Activated naive CD4-positive, alpha-beta T cell treated with anti-CD3 and anti-CD28 coated beads, Interleukin-2, amount 10 ng/mL, durations not matched to agents 7 days and 5 days (primary cell): ENCODE measurements at regions of chr16 and their contacts with region 1.

Region 1: GRCh38 chr16:19502395-19503131 is 19.3 kb downstream of the GDE1 start:
- DNase-seq: peak; percentile 82
- H3K4me3 Mint-ChIP-seq: no peak overlapping the region
- H3K27ac Mint-ChIP-seq: no peak overlapping the region
- H3K4me1 Mint-ChIP-seq: no peaks in the 10 kb centered on the region
- H3K27me3 Mint-ChIP-seq: no peaks in the 10 kb centered on the region

Region 2: GRCh38 chr16:19086322-19087199 is 416.0 kb before region 1 on chr16:
- CTCF ChIA-PET with region 1: interaction called, 29 read pairs
- DNase-seq: peak; percentile 80
- H3K4me3 Mint-ChIP-seq: peak overlapping the region; percentile 38
- H3K27ac Mint-ChIP-seq: no peak overlapping the region
- H3K4me1 Mint-ChIP-seq: peaks cover 6% of the 10 kb centered on the region
- H3K27me3 Mint-ChIP-seq: peaks cover 38% of the 10 kb centered on the region

Region 3: GRCh38 chr16:19382887-19383816 is 119.4 kb before region 1 on chr16:
- CTCF ChIA-PET with region 1: interaction called, 82 read pairs
- DNase-seq: no peak
- H3K4me3 Mint-ChIP-seq: no peak overlapping the region
- H3K27ac Mint-ChIP-seq: no peak overlapping the region
- H3K4me1 Mint-ChIP-seq: peaks cover 20% of the 10 kb centered on the region
- H3K27me3 Mint-ChIP-seq: peaks cover 30% of the 10 kb centered on the region

Region 4: DNA sequence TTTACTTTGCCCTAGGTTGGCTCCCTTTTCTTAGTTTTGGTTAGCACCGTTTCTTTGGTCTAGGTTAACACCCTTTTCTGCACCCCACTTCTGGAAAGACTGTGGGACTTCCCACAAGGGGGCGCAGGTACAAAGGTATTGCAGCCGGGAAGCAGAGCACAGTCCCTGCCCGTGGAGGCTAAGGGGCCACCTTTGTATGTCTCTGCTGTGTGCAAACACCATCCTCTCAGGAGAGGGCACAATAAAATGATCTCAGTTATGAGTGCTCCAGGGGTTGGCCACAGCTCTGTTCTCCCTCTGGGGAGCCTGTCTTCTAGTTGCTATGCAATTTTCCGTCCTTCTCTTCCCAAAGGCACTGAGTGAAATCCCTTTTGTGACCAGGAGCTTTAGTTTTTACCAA is 113.3 kb before region 1 on chr16:
- CTCF ChIA-PET with region 1: interaction called, 82 read pairs
- DNase-seq: peak; percentile 70
- H3K4me3 Mint-ChIP-seq: no peak overlapping the region
- H3K27ac Mint-ChIP-seq: no peak overlapping the region
- H3K4me1 Mint-ChIP-seq: no peaks in the 10 kb centered on the region
- H3K27me3 Mint-ChIP-seq: peaks cover 16% of the 10 kb centered on the region

Region 5: DNA sequence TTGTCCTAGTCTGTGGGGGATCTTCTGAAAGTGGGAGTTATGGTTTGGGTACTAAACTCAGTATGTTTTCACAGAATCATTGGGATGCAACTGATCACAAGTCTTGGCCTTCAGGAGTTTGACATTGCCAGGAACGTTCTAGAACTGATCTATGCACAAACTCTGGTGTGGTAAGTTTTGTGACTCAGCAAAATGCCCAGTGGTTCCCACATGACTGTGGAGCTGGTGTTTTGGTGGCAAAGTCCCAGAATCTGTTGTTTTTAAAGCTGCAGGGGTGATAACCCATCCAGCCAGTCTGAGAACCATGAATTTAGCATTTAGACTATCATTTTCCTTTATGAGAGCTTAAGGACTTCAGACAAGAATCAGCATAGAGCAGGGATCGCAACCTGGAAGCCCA is 21.3 kb before region 1 on chr16:
- CTCF ChIA-PET with region 1: no interaction called
- DNase-seq: no peak
- H3K4me3 Mint-ChIP-seq: no peak overlapping the region
- H3K27ac Mint-ChIP-seq: no peak overlapping the region
- H3K4me1 Mint-ChIP-seq: no peaks in the 10 kb centered on the region
- H3K27me3 Mint-ChIP-seq: peaks cover 3% of the 10 kb centered on the region